AG04449 (cell line): ENCODE measurements at regions of chr12 and their contacts with region 1.

Region 1: DNA sequence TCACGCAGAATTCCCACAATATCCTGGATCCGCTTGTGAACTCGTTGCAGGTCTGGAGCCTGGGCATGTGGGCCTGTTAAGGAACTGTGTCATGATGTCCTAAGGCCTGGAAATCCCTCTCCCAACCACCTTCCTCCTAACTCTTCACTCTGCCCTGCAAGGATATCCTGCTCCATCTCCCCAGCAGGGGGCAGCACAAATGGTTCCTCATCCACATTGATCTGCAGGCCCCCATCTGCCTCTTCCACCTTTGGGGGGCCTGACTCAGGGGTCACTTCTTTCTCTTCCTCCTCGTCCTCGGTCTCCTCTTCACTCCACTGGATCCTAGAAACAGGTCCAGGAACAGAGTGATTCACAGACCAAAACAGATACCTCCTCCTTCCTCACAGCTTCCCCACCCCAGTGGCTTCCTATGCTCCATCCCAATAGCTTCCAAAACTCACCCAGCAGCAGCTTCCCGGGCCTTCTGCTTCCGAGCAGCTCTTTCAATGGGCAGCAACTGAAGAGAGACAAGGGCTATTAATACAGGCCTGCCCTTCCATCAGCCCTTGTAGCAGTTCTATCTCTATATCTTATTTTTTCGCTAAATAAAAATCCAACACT is 4.5 kb downstream of the NOP2 start:
- DNase-seq: no peak
- H3K4me3 ChIP-seq: no peak overlapping the region
- CTCF ChIP-seq: peak; percentile 84

Region 2: GRCh38 chr12:6493497-6494257 is 69.9 kb before region 1 on chr12 and contains the start of gene NCAPD2:
- CTCF ChIA-PET with region 1: no interaction called
- POLR2A ChIA-PET with region 1: no interaction called
- DNase-seq: peak; percentile 55
- H3K4me3 ChIP-seq: peak within 1 kb of the TSS; percentile 97
- CTCF ChIP-seq: peak; percentile 24

Region 3: DNA sequence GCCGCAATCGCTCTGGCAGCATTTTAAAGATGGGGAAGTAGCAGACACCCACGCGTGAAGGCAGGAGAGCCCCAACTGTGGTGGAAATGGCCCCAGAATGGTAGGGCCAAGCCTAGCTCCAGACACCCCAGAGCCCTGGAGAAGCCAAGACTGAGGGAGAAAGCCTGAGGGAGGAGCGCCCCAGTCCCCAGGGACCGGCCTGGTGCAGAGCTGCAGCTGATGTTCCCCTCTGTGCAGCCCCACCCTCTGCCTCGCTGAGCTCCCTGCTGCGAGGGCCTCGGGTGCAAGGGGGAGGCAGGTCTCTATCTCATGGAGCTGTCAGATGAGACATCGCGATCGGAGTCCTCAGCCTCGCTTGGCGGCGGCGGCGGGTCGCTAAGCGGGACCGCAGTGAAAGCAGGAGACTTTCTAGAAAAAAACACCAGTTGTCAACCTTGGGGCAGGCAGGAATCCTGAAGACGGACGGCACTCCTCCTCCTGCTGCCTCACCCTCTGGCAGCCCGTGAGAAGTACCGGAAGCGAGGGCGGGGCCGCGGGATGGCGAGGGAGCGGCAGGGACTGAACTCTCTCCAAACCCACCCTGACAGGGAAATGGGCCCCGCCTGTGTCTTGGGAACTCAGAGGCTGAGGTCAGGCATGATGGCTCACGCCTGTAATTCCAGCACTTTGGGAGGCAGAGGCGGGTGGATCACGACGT is 23.2 kb before region 1 on chr12:
- CTCF ChIA-PET with region 1: interaction called, 235 read pairs
- POLR2A ChIA-PET with region 1: interaction called, 15 read pairs
- DNase-seq: no peak
- H3K4me3 ChIP-seq: peak overlapping the region; percentile 10; the same call in 1 of the 2 replicates
- CTCF ChIP-seq: peak; percentile 7

Region 4: DNA sequence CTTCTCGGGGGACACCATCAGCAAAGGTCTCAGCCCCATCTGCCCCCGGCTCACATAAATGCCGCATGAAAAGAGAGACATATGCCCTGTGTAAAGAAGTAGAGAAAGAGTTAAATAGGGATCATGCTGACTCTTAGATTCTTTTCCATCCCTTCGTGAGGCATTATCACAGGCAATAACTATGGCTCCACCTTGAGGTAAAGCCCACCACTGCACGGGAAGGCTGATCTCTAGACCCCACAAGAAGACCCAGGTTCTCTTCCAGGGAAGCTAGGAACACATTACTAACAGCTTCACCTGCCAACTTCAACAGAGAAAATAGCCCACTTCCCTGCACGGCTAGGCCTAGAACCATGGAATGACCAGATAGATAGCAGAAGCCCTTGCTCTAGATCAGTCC is 18.6 kb after region 1 on chr12:
- CTCF ChIA-PET with region 1: interaction called, 24 read pairs
- POLR2A ChIA-PET with region 1: no interaction called
- DNase-seq: no peak
- H3K4me3 ChIP-seq: no peak overlapping the region
- CTCF ChIP-seq: no peak

Region 5: GRCh38 chr12:6592087-6592486 is 28.5 kb after region 1 on chr12:
- CTCF ChIA-PET with region 1: interaction called, 24 read pairs
- POLR2A ChIA-PET with region 1: no interaction called
- DNase-seq: no peak
- H3K4me3 ChIP-seq: no peak overlapping the region
- CTCF ChIP-seq: no peak